A549 (cell line): ENCODE measurements at regions of chr10 and their contacts with region 1.

Region 1: GRCh38 chr10:102917962-102918816 is at the start of gene CNNM2:
- DNase-seq: peak; percentile 90 to 100
- ATAC-seq: peak; percentile 93
- H3K4me3 ChIP-seq: peak within 1 kb of the TSS; percentile 87
- H3K27ac ChIP-seq: peak within 1 kb of the TSS; percentile 85 to 93
- H3K4me1 ChIP-seq: peaks cover 28% of the 10 kb centered on the region
- CTCF ChIP-seq: 0 out of 3 replicates have a peak, but pooled peaks have one; percentile 27
- EP300 ChIP-seq: no peak
- POLR2A ChIP-seq: peak; percentile 63
- RAD21 ChIP-seq: peak in 1 of 2 experiments; percentile 48; a peak in 3 of 5 replicates
- polyA plus RNA-seq, gene CNNM2: 6.4 TPM in 2 replicates

Region 2: DNA sequence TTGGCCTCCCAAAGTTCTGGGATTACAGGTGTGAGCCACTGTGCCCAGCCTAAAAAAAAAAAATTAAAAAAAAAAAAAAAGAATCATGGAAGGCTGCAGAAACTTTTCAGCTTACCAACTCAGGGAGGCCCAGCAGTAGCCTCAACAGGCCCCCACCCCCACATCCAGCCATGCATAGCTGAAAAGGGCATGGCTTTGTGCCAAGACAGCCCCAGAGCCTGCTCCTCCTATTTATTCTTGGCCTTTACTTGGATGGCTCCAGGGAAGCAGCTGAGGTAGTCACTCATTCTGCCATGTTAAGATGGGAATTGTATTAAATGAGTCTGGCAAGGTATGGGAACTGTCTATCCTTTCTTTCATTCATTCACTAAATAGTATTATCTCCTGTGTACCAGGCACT is 13.8 kb before region 1 on chr10:
- CTCF ChIA-PET with region 1: interaction called, 80 read pairs
- POLR2A ChIA-PET with region 1: no interaction called
- DNase-seq: no peak
- ATAC-seq: no peak
- H3K4me3 ChIP-seq: no peak overlapping the region
- H3K27ac ChIP-seq: no peak overlapping the region
- H3K4me1 ChIP-seq: no peaks in the 10 kb centered on the region
- CTCF ChIP-seq: no peak
- EP300 ChIP-seq: no peak
- POLR2A ChIP-seq: no peak
- RAD21 ChIP-seq: no peak

Region 3: GRCh38 chr10:102951316-102951715 is 33.1 kb after region 1 on chr10:
- CTCF ChIA-PET with region 1: interaction called, 15 read pairs
- POLR2A ChIA-PET with region 1: no interaction called
- DNase-seq: no peak
- ATAC-seq: no peak
- H3K4me3 ChIP-seq: no peak overlapping the region
- H3K27ac ChIP-seq: no peak overlapping the region
- H3K4me1 ChIP-seq: no peaks in the 10 kb centered on the region
- CTCF ChIP-seq: no peak
- EP300 ChIP-seq: no peak
- POLR2A ChIP-seq: no peak
- RAD21 ChIP-seq: no peak

Region 4: GRCh38 chr10:103053659-103054581 is 135.7 kb after region 1 on chr10:
- CTCF ChIA-PET with region 1: interaction called, 53 read pairs
- POLR2A ChIA-PET with region 1: no interaction called
- DNase-seq: peak; percentile 59 to 85
- ATAC-seq: peak; percentile 100
- H3K4me3 ChIP-seq: peak overlapping the region; percentile 14; the same call in 1 of the 3 replicates
- H3K27ac ChIP-seq: peak overlapping the region in 1 of 2 experiments; percentile 62; a peak in 3 of 6 replicates
- H3K4me1 ChIP-seq: peaks cover 5% of the 10 kb centered on the region; the same call in 2 of the 3 replicates
- CTCF ChIP-seq: peak; percentile 57
- EP300 ChIP-seq: no peak
- POLR2A ChIP-seq: no peak
- RAD21 ChIP-seq: peak; percentile 65 to 66

Region 5: DNA sequence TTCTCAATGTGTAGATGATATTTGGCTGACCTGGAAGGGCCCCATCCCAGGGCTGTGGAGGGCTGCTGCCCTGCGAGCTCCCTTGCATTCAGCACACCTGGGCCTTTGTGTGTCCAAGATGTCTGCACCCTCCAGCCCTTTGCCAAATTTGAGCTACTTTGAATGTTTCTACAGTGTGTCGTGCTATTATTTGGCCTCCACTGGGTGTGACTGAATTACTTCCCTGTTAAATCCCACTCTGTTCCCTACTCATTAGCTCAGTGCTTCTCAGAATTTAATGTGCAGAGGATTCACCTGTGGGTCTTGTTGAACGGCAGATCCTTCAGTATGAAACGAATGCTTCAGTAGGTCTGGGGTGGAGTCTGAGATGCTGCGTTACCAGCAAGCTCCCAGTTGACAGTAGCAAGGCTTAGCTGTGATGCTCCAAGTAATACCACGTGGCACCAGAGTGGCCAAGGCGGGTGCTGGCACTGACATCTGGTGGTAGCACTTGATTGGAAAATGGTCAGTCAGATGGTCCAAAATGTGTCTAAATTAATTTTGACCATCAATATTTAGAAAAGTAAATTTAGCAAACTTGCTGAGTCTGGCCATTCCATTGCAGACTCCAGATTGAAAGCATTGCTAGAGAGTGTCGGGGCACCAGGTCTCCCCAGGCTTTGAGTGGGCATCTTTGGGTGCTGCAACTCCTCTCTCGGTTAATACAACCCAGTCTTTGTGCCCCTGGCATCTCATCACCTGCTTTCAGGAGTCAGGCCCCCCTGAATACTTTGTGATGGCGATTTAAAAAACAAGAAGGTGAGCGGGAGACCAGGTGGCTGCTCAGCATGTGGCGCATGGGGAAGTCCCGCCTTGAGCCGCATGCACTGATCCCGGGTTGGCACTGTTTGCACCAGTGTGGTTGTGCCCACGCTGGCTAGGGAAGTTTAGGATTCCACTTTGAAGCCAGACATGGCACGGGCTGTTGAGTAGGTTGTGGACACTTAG is 144.7 kb after region 1 on chr10:
- CTCF ChIA-PET with region 1: interaction called, 199 read pairs
- POLR2A ChIA-PET with region 1: interaction called, 5 read pairs
- DNase-seq: peak in 1 of 2 experiments; percentile 54
- ATAC-seq: peak; percentile 84 to 89
- H3K4me3 ChIP-seq: no peak overlapping the region
- H3K27ac ChIP-seq: no peak overlapping the region
- H3K4me1 ChIP-seq: no peaks in the 10 kb centered on the region
- CTCF ChIP-seq: peak; percentile 35
- EP300 ChIP-seq: no peak
- POLR2A ChIP-seq: no peak
- RAD21 ChIP-seq: peak; percentile 53 to 66

Region 6: DNA sequence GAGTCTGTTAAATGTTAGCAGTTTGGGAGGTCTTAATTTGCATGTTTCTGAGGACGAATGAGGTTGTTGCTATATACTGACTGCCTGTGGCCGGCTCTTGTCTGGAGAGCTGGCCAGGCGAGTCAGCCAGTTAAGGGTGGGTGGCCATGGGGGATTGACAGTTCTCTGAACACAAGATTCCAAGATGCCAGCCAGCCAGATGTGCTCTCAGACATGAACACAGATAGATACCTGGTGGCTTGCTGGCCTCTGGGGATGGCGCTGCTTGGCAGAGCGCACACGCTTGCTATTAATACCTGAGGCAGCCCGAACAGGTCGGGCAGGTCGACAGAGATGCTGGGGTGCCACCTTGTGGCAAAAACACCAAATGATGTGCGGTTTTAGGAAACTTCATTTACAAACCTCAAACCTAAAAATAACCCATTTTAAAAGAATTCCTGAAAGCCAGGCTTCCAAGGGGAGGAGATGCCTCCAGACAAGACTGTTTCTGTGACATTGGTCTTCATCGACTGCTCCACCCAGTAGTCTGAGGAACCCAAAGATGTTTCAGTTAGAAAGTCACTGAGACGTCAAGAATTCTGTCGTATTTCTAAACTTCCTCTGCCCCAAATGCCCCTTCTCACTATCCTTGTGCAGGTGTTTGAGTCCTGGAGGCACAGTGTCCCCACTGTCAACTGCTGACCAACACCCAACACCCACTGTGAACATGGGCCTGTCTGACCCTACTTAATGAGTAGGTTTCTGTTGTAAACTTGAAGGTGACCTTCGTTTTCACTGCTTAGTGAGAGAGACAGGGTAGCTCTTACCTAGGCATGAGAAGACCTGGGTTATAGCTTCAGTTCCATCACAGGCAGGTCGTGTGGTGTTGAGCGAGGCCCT is 151.5 kb after region 1 on chr10:
- CTCF ChIA-PET with region 1: interaction called, 199 read pairs
- POLR2A ChIA-PET with region 1: interaction called, 8 read pairs
- DNase-seq: peak; percentile 25 to 73
- ATAC-seq: peak; percentile 70 to 85
- H3K4me3 ChIP-seq: no peak overlapping the region
- H3K27ac ChIP-seq: no peak overlapping the region
- H3K4me1 ChIP-seq: no peaks in the 10 kb centered on the region
- CTCF ChIP-seq: peak; percentile 92
- EP300 ChIP-seq: no peak
- POLR2A ChIP-seq: no peak
- RAD21 ChIP-seq: peak; percentile 94 to 95

Region 7: DNA sequence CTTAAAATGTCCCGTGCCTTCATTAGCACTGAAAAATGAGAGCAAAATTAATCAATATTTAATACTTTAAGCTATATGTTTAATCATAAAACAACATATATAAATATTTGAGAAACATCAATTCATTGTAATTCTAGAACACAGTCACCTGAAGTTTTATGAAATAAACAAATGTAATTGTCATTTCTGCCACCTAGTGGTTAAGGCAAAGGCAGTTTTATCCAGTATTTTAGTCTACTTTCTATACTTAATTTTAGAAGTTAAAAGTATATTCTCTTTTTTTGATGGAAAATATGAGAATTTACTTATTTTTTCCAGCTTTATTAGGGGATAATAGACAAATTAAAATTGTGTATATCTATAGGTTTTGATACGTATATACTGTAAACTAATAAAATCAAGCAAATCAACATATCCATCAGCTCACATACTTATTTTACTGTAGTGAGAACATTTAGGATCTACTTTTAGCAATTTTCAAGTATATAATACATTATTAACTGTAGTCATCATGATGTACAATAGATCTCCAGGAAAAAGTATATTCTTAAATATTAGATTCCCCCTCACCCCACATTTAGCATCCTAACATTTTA is 415.8 kb after region 1 on chr10:
- CTCF ChIA-PET with region 1: interaction called, 14 read pairs
- POLR2A ChIA-PET with region 1: no interaction called
- DNase-seq: peak; percentile 34 to 35
- ATAC-seq: no peak
- H3K4me3 ChIP-seq: no peak overlapping the region
- H3K27ac ChIP-seq: no peak overlapping the region
- H3K4me1 ChIP-seq: no peaks in the 10 kb centered on the region
- CTCF ChIP-seq: peak; percentile 69; the same call in 2 of the 3 replicates
- EP300 ChIP-seq: no peak
- POLR2A ChIP-seq: no peak
- RAD21 ChIP-seq: peak; percentile 60 to 79